ENCODE measurements at regions of chr13 and their contacts with region 1.

Region 1: DNA sequence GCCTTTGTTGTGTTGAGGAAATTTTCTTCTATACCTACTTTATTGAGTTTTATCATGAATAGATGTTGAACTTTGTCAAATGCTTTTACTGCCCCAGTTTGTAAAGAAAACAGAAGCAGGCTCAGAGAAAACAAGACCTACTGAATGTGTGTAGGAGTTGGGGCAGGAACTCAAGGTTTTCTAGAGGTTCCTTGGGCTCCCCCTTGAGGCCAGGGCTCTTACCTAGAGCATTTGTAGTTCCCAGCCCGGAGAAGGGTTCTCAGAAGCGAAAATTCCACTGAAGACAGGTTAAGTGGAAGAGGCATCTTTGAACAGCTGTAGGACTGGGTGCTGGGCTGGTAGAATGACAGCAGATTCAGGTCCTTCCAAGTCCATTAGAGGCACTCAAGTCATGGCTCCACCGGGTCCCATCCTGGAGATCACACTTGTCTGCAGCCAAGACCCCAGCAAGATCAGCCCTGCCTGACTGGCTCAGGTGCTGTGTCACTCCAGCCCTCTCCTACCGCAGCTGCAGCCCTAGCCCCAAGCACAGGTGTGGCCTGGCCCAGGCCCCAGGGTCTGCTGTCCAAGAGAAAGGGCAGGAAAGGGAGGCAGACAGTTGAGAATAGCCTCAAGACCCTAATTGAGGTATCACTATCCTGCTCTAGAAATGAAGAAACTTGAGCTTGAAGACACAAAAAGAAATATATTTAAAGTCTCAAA is 425.5 kb downstream of the PCDH20 start:
- DNase-seq: peak in 1 of 2 experiments; percentile 40
- H3K4me3 ChIP-seq: no peak overlapping the region
- H3K4me3 Mint-ChIP-seq: no peak overlapping the region
- H3K27ac Mint-ChIP-seq: no peak overlapping the region
- H3K4me1 ChIP-seq: no peaks in the 10 kb centered on the region
- H3K4me1 Mint-ChIP-seq: no peaks in the 10 kb centered on the region
- H3K27me3 ChIP-seq: no peaks in the 10 kb centered on the region; the same call in 1 of the 2 replicates
- H3K27me3 Mint-ChIP-seq: no peaks in the 10 kb centered on the region
- CTCF ChIP-seq: peak; percentile 16 to 39

Region 2: DNA sequence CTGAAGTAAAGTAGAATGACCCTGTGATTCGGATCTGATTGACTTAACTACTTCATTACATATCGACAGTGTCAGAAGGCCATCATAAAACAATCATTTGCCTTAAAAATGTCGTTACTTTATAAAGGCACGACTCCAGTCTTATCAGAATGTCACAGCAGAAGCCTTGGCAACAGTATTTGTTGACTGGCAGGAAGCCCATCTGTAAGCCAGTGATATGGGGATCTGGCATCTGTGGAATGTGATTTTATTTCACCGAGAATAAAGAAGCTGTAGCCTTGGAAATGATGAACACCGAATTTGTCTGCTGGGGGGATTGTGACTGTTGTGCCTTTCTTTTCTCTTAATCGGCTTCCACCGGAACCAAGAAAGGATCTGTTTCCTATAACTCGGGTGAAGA is 230.7 kb before region 1 on chr13:
- CTCF ChIA-PET with region 1: no interaction called
- POLR2A ChIA-PET with region 1: no interaction called
- intact Hi-C with region 1: loop called (anchors 10 kb)
- DNase-seq: no peak
- H3K4me3 ChIP-seq: no peak overlapping the region
- H3K4me3 Mint-ChIP-seq: no peak overlapping the region
- H3K27ac Mint-ChIP-seq: no peak overlapping the region
- H3K4me1 ChIP-seq: peaks cover 10% of the 10 kb centered on the region; the same call in 1 of the 2 replicates
- H3K4me1 Mint-ChIP-seq: peaks cover 10% of the 10 kb centered on the region
- H3K27me3 ChIP-seq: no peaks in the 10 kb centered on the region
- H3K27me3 Mint-ChIP-seq: peaks cover 5% of the 10 kb centered on the region
- CTCF ChIP-seq: no peak

Region 3: DNA sequence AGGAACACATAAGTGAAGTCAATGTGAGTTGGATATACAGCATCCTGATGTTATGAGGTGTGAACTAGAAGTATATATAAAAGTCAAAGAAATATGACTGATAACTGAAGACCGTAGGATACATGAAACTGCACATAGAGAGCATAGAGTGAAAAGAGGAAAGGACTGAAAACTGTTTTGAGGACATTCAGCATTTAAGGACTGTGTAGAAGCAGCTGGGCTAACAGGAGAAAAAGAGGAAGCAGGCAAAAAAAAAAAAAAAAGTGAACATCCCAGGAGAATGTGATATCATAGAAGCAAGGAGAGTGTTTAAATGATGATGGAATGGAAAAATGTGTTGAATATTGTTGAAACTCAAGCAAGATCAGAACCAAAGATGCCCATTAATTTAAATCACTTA is 62.0 kb after region 1 on chr13:
- CTCF ChIA-PET with region 1: no interaction called
- POLR2A ChIA-PET with region 1: no interaction called
- intact Hi-C with region 1: no loop called
- DNase-seq: no peak
- H3K4me3 ChIP-seq: no peak overlapping the region
- H3K4me3 Mint-ChIP-seq: no peak overlapping the region
- H3K27ac Mint-ChIP-seq: no peak overlapping the region
- H3K4me1 ChIP-seq: peaks cover 3% of the 10 kb centered on the region
- H3K4me1 Mint-ChIP-seq: no peaks in the 10 kb centered on the region
- H3K27me3 ChIP-seq: no peaks in the 10 kb centered on the region
- H3K27me3 Mint-ChIP-seq: no peaks in the 10 kb centered on the region
- CTCF ChIP-seq: no peak

Region 4: GRCh38 chr13:61110597-61111203 is 120.5 kb after region 1 on chr13:
- CTCF ChIA-PET with region 1: no interaction called
- POLR2A ChIA-PET with region 1: no interaction called
- intact Hi-C with region 1: no loop called
- DNase-seq: no peak
- H3K4me3 ChIP-seq: no peak overlapping the region
- H3K4me3 Mint-ChIP-seq: no peak overlapping the region
- H3K27ac Mint-ChIP-seq: no peak overlapping the region
- H3K4me1 ChIP-seq: no peaks in the 10 kb centered on the region
- H3K4me1 Mint-ChIP-seq: no peaks in the 10 kb centered on the region
- H3K27me3 ChIP-seq: no peaks in the 10 kb centered on the region
- H3K27me3 Mint-ChIP-seq: no peaks in the 10 kb centered on the region
- CTCF ChIP-seq: no peak

Region 5: GRCh38 chr13:61286148-61286745 is 296.1 kb after region 1 on chr13:
- CTCF ChIA-PET with region 1: no interaction called
- POLR2A ChIA-PET with region 1: no interaction called
- intact Hi-C with region 1: no loop called
- DNase-seq: peak; percentile 51 to 54
- H3K4me3 ChIP-seq: no peak overlapping the region
- H3K4me3 Mint-ChIP-seq: no peak overlapping the region
- H3K27ac Mint-ChIP-seq: no peak overlapping the region
- H3K4me1 ChIP-seq: no peaks in the 10 kb centered on the region
- H3K4me1 Mint-ChIP-seq: no peaks in the 10 kb centered on the region
- H3K27me3 ChIP-seq: no peaks in the 10 kb centered on the region
- H3K27me3 Mint-ChIP-seq: no peaks in the 10 kb centered on the region
- CTCF ChIP-seq: peak; percentile 49 to 72

Measured in Caco-2 (cell line).